ENCODE measurements at regions of chr12 and their contacts with region 1.

Region 1: GRCh38 chr12:123043536-123044001 is 63.1 kb downstream of the ARL6IP4 start:
- DNase-seq: peak; percentile 73
- CTCF ChIP-seq: peak; percentile 74

Region 2: GRCh38 chr12:123056053-123056741 is 12.6 kb after region 1 on chr12:
- CTCF ChIA-PET with region 1: interaction called, 19 read pairs
- POLR2A ChIA-PET with region 1: no interaction called
- DNase-seq: no peak
- CTCF ChIP-seq: no peak

Region 3: GRCh38 chr12:123062681-123063486 is 19.3 kb after region 1 on chr12:
- CTCF ChIA-PET with region 1: interaction called, 19 read pairs
- POLR2A ChIA-PET with region 1: no interaction called
- DNase-seq: no peak
- CTCF ChIP-seq: no peak

Measured in GM10248 (cell line).